RWPE1 (cell line): ENCODE measurements at regions of chr9 and their contacts with region 1.

Region 1: DNA sequence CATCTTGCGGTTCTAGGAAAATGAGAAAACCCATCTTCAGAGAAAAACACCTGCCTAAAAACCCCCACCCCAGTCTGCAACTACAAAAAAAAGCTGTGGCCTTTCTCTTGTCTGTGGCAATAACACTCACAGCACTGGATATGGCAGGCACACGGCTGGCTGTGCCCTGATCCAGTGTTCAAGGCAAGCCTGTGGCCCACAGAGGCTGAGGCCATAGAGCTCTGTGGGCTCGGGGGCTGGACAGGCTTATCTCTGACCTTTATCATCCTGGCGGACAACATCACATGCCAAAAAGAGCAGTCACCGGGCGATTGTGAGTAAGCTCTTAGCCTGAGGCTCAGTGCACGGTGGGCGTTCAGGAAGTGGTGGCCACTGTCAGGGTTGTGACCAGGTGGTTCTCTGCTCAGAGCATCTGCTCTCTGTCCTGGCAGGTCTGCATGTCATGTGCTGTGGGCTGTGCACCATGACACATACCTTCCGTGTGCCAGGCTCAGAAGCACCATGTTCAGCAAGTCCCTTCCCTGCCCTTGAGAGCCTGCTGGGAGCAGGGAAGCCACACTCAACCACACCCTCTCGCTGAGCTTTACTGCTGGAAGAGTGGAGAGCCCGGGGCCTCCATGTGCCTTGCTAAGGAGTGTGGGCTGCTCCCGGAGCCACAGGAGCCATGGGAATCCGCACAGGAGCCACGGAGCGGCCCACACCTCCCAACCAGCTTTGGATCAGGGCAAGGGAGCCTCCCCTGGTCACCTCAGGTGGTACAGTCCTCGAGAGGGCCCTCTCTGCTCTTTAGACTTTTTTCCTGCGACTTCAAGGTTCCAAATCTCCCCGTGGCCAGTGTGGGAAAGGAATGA is 34.6 kb upstream of the WDR38 start:
- DNase-seq: peak; percentile 82
- H3K27ac ChIP-seq: peak overlapping the region; percentile 99
- CTCF ChIP-seq: no peak; the same call in 1 of the 2 replicates

Region 2: GRCh38 chr9:124831642-124832364 is 13.1 kb after region 1 on chr9:
- CTCF ChIA-PET with region 1: interaction called, 4 read pairs
- POLR2A ChIA-PET with region 1: interaction called, 18 read pairs
- DNase-seq: no peak
- H3K27ac ChIP-seq: peak overlapping the region; percentile 95
- CTCF ChIP-seq: no peak

Region 3: GRCh38 chr9:125143375-125144090 is 324.9 kb after region 1 on chr9 and contains the start of gene SCAI:
- CTCF ChIA-PET with region 1: no interaction called
- POLR2A ChIA-PET with region 1: no interaction called
- DNase-seq: peak; percentile 100
- H3K27ac ChIP-seq: peak within 1 kb of the TSS; percentile 68
- CTCF ChIP-seq: peak; percentile 100